CD8-positive, alpha-beta T cell (primary cell): ENCODE measurements at regions of chr14 and their contacts with region 1.

Region 1: GRCh38 chr14:105480952-105481801 is 5.5 kb upstream of the CRIP1 start:
- DNase-seq: peak; percentile 85 to 94 (median 90)
- ATAC-seq: peak; percentile 55
- H3K4me3 ChIP-seq: peak overlapping the region; percentile 48 to 54
- H3K4me3 Mint-ChIP-seq: peak overlapping the region; percentile 81
- H3K27ac ChIP-seq: peak overlapping the region; percentile 95 to 98
- H3K27ac Mint-ChIP-seq: peak overlapping the region; percentile 100
- H3K4me1 ChIP-seq: peaks cover 88% of the 10 kb centered on the region
- H3K4me1 Mint-ChIP-seq: peaks cover 57% of the 10 kb centered on the region
- H3K27me3 ChIP-seq: peaks cover 0 to 5% of the 10 kb centered on the region in 2 experiments
- H3K27me3 Mint-ChIP-seq: peaks cover 3% of the 10 kb centered on the region
- CTCF ChIP-seq: peak; percentile 80

Region 2: GRCh38 chr14:105065280-105066228 is 415.6 kb before region 1 on chr14 and contains the start of gene GPR132:
- CTCF ChIA-PET with region 1: interaction called, 3 read pairs
- POLR2A ChIA-PET with region 1: no interaction called
- intact Hi-C with region 1: loop called (anchors 5 to 10 kb)
- DNase-seq: peak; percentile 79 to 99 (median 89)
- ATAC-seq: peak; percentile 87
- H3K4me3 ChIP-seq: peak within 1 kb of the TSS; percentile 90 to 92
- H3K4me3 Mint-ChIP-seq: peak within 1 kb of the TSS; percentile 94
- H3K27ac ChIP-seq: peak within 1 kb of the TSS; percentile 97 to 98
- H3K27ac Mint-ChIP-seq: peak within 1 kb of the TSS; percentile 98
- H3K4me1 ChIP-seq: peaks cover 88% of the 10 kb centered on the region
- H3K4me1 Mint-ChIP-seq: peaks cover 75% of the 10 kb centered on the region
- H3K27me3 ChIP-seq: no peaks in the 10 kb centered on the region
- H3K27me3 Mint-ChIP-seq: no peaks in the 10 kb centered on the region
- CTCF ChIP-seq: no peak
- total RNA-seq, gene GPR132: 91.8 to 101 TPM

Region 3: DNA sequence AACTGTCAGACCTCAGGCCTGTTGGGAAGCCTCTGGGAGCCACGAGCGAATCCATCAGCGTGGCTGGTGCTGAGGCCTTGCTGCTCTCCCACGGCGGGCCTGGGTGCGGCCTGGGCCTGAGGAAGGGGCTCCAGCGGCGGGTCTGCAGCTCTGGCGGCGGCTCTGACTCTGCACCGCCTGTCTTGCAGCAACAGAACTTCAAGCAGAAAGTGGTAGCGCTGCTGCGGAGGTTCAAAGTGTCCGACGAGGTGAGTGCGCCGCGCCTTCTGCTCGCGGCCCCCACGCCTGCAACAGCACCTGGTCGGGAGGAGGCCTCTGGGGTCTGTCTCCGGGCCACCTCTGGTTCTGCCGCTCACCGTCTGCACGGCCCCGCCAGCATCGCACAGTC is 111.5 kb before region 1 on chr14:
- CTCF ChIA-PET with region 1: interaction called, 15 read pairs
- POLR2A ChIA-PET with region 1: interaction called, 5 read pairs
- intact Hi-C with region 1: loop called in 1 of 2 experiments (anchors 2 kb)
- DNase-seq: no peak
- ATAC-seq: no peak
- H3K4me3 ChIP-seq: no peak overlapping the region
- H3K4me3 Mint-ChIP-seq: no peak overlapping the region
- H3K27ac ChIP-seq: no peak overlapping the region
- H3K27ac Mint-ChIP-seq: no peak overlapping the region
- H3K4me1 ChIP-seq: peaks cover 14% of the 10 kb centered on the region
- H3K4me1 Mint-ChIP-seq: peaks cover 7% of the 10 kb centered on the region
- H3K27me3 ChIP-seq: no peaks in the 10 kb centered on the region
- H3K27me3 Mint-ChIP-seq: no peaks in the 10 kb centered on the region
- CTCF ChIP-seq: no peak

Region 4: GRCh38 chr14:105375635-105376057 is 105.5 kb before region 1 on chr14:
- CTCF ChIA-PET with region 1: interaction called, 15 read pairs
- POLR2A ChIA-PET with region 1: interaction called, 5 read pairs
- intact Hi-C with region 1: loop called in 1 of 2 experiments (anchors 2 kb)
- DNase-seq: peak in 3 of 9 experiments; percentile 24 to 50 (median 35)
- ATAC-seq: peak; percentile 43
- H3K4me3 ChIP-seq: no peak overlapping the region
- H3K4me3 Mint-ChIP-seq: no peak overlapping the region
- H3K27ac ChIP-seq: no peak overlapping the region
- H3K27ac Mint-ChIP-seq: no peak overlapping the region
- H3K4me1 ChIP-seq: peaks cover 13% of the 10 kb centered on the region
- H3K4me1 Mint-ChIP-seq: peaks cover 12% of the 10 kb centered on the region
- H3K27me3 ChIP-seq: peaks cover 0 to 2% of the 10 kb centered on the region in 2 experiments
- H3K27me3 Mint-ChIP-seq: no peaks in the 10 kb centered on the region
- CTCF ChIP-seq: no peak

Region 5: GRCh38 chr14:105398044-105398725 is 83.0 kb before region 1 on chr14 and contains the start of gene TEX22:
- CTCF ChIA-PET with region 1: interaction called, 7 read pairs
- POLR2A ChIA-PET with region 1: no interaction called
- intact Hi-C with region 1: loop called in 1 of 2 experiments (anchors 2 kb)
- DNase-seq: peak; percentile 73 to 97 (median 90)
- ATAC-seq: peak; percentile 90
- H3K4me3 ChIP-seq: peak within 1 kb of the TSS; percentile 63 to 76
- H3K4me3 Mint-ChIP-seq: peak within 1 kb of the TSS; percentile 79
- H3K27ac ChIP-seq: peak within 1 kb of the TSS; percentile 71
- H3K27ac Mint-ChIP-seq: peak within 1 kb of the TSS; percentile 78
- H3K4me1 ChIP-seq: peaks cover 22% of the 10 kb centered on the region
- H3K4me1 Mint-ChIP-seq: peaks cover 15% of the 10 kb centered on the region
- H3K27me3 ChIP-seq: no peaks in the 10 kb centered on the region
- H3K27me3 Mint-ChIP-seq: no peaks in the 10 kb centered on the region
- CTCF ChIP-seq: no peak
- total RNA-seq, gene TEX22: 1.1 TPM in 1 of 2 experiments, not detected in the other

Region 6: GRCh38 chr14:105456736-105457617 is 24.2 kb before region 1 on chr14:
- CTCF ChIA-PET with region 1: interaction called, 10 read pairs
- POLR2A ChIA-PET with region 1: no interaction called
- intact Hi-C with region 1: no loop called
- DNase-seq: peak in 1 of 9 experiments; percentile 11
- ATAC-seq: no peak
- H3K4me3 ChIP-seq: no peak overlapping the region
- H3K4me3 Mint-ChIP-seq: no peak overlapping the region
- H3K27ac ChIP-seq: no peak overlapping the region
- H3K27ac Mint-ChIP-seq: no peak overlapping the region
- H3K4me1 ChIP-seq: no peaks in the 10 kb centered on the region
- H3K4me1 Mint-ChIP-seq: no peaks in the 10 kb centered on the region
- H3K27me3 ChIP-seq: no peaks in the 10 kb centered on the region
- H3K27me3 Mint-ChIP-seq: no peaks in the 10 kb centered on the region
- CTCF ChIP-seq: no peak